Dendritic cell treated with granulocyte-macrophage colony-stimulating factor and Interleukin-4, amounts not matched to agents 40 ng/mL and 50 ng/mL, for 4 days (primary cell): ENCODE measurements at regions of chr4 and their contacts with region 1.

Region 1: DNA sequence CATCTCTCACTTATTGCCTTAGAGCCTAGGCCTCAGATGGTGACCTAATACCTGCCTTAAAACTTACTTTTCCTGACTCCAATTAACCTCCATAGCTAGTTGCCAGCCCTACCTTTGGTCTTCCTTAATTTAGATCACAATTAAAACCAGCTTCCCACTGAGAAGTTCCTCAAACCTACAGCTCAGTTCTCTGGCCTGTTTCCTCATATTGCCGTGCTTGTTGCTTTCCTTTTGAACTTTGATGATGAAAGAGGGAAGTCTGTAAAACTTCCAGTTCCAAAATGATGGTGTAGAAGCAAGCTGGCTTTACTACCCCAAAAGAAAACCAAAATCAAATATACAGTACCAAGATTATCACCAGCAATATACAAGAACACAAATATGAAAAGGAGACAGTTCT is 28.9 kb upstream of the CAMK2D start:
- H3K4me3 Mint-ChIP-seq: no peak overlapping the region
- H3K27ac Mint-ChIP-seq: no peak overlapping the region
- H3K4me1 Mint-ChIP-seq: peaks cover 12% of the 10 kb centered on the region
- H3K27me3 Mint-ChIP-seq: no peaks in the 10 kb centered on the region

Region 2: GRCh38 chr4:113806850-113807249 is 16.4 kb after region 1 on chr4:
- intact Hi-C with region 1: loop called (anchors 2 kb)
- H3K4me3 Mint-ChIP-seq: no peak overlapping the region
- H3K27ac Mint-ChIP-seq: no peak overlapping the region
- H3K4me1 Mint-ChIP-seq: peaks cover 10% of the 10 kb centered on the region
- H3K27me3 Mint-ChIP-seq: no peaks in the 10 kb centered on the region

Region 3: GRCh38 chr4:113825272-113825671 is 34.8 kb after region 1 on chr4:
- intact Hi-C with region 1: loop called (anchors 5 kb)
- H3K4me3 Mint-ChIP-seq: no peak overlapping the region
- H3K27ac Mint-ChIP-seq: peak overlapping the region; percentile 39
- H3K4me1 Mint-ChIP-seq: peaks cover 37% of the 10 kb centered on the region
- H3K27me3 Mint-ChIP-seq: no peaks in the 10 kb centered on the region